ENCODE measurements at regions of chr11 and their contacts with region 1.

Region 1: DNA sequence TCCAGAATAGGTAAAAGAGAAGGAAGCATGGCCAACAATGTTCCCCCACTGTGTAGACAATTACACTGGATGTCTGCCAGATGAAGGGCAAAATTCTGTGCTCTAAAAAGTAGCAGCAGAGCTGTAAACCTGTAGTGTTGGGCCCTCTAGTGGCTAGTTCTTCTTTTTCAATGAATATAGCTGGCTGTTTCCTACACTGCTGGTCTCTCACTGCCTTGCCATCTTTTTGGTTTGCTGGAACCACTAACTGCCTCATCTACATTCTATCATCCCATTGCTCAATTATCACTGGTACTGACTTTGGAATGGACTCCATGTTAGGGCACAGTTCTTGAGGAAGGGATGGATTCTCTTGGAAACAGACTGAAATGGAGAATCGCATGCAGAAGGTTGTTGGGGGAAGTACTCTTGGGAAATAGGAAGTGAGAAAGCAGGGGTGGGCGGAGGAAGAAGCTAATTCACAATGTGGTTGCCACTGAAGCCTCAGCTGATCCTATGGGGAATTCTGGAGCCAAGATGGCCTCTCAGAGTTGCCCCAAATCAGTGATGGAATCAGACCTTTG is 17.9 kb downstream of the KCNE3 start:
- DNase-seq: peak in 1 of 2 donors; percentile 83
- ATAC-seq: peak; percentile 76 to 88 (median 86)
- H3K4me3 ChIP-seq: no peak overlapping the region
- H3K4me3 Mint-ChIP-seq: no peak overlapping the region
- H3K27ac ChIP-seq: no peak overlapping the region
- H3K27ac Mint-ChIP-seq: no peak overlapping the region
- H3K4me1 ChIP-seq: no peaks in the 10 kb centered on the region
- H3K4me1 Mint-ChIP-seq: peaks cover 0 to 10% of the 10 kb centered on the region in 2 donors
- H3K27me3 ChIP-seq: no peaks in the 10 kb centered on the region
- H3K27me3 Mint-ChIP-seq: peaks cover 11 to 18% of the 10 kb centered on the region in 2 donors
- CTCF ChIP-seq: peak; percentile 61

Region 2: GRCh38 chr11:73965076-73965860 is 484.2 kb before region 1 on chr11:
- intact Hi-C with region 1: loop called (anchors 5 kb)
- DNase-seq: peak in 1 of 2 donors; percentile 12
- ATAC-seq: no peak
- H3K4me3 ChIP-seq: no peak overlapping the region
- H3K4me3 Mint-ChIP-seq: no peak overlapping the region
- H3K27ac ChIP-seq: no peak overlapping the region
- H3K27ac Mint-ChIP-seq: no peak overlapping the region
- H3K4me1 ChIP-seq: peaks cover 36% of the 10 kb centered on the region
- H3K4me1 Mint-ChIP-seq: peaks cover 25 to 30% of the 10 kb centered on the region in 2 donors
- H3K27me3 ChIP-seq: no peaks in the 10 kb centered on the region
- H3K27me3 Mint-ChIP-seq: no peaks in the 10 kb centered on the region
- CTCF ChIP-seq: no peak

Region 3: GRCh38 chr11:74255741-74256369 is 193.6 kb before region 1 on chr11:
- intact Hi-C with region 1: loop called (anchors 1 kb)
- DNase-seq: peak; percentile 32 to 81
- ATAC-seq: peak; percentile 69 to 91 (median 74)
- H3K4me3 ChIP-seq: no peak overlapping the region
- H3K4me3 Mint-ChIP-seq: no peak overlapping the region
- H3K27ac ChIP-seq: no peak overlapping the region
- H3K27ac Mint-ChIP-seq: no peak overlapping the region
- H3K4me1 ChIP-seq: no peaks in the 10 kb centered on the region
- H3K4me1 Mint-ChIP-seq: no peaks in the 10 kb centered on the region
- H3K27me3 ChIP-seq: no peaks in the 10 kb centered on the region
- H3K27me3 Mint-ChIP-seq: no peaks in the 10 kb centered on the region
- CTCF ChIP-seq: peak; percentile 83

Region 4: DNA sequence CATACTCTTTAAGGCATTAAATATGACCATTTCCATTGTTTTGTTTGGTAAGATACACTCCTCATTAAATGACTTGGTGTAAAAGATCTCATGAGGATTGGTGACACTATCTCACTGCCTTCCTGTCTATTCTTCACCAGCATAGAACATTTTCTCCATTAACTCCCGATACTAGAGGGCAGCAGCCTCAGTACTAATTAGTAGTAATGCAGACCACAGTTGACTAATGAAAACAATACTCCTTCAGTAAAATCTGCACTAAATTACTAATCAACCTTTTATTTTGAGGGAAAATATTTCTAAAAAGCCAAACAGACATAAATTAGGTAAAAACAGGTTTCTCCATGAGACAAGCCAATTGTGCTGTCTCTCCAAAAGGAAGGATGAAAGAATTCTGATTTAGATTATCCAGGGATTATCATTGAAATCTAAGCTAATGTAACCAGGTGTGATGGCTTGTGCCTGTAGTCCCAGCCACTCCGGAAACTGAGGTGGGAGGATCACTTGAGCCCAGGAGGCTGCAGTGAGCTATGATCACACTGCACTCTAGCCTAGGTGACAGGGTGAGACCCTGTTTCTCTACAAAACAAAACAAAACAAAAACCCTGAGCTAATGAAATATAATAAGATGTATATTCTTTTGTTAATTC is 60.6 kb before region 1 on chr11:
- intact Hi-C with region 1: loop called (anchors 1 kb)
- DNase-seq: peak in 1 of 2 donors; percentile 84
- ATAC-seq: peak; percentile 88 to 89 (median 89)
- H3K4me3 ChIP-seq: no peak overlapping the region
- H3K4me3 Mint-ChIP-seq: no peak overlapping the region
- H3K27ac ChIP-seq: no peak overlapping the region
- H3K27ac Mint-ChIP-seq: no peak overlapping the region
- H3K4me1 ChIP-seq: no peaks in the 10 kb centered on the region
- H3K4me1 Mint-ChIP-seq: no peaks in the 10 kb centered on the region
- H3K27me3 ChIP-seq: no peaks in the 10 kb centered on the region
- H3K27me3 Mint-ChIP-seq: no peaks in the 10 kb centered on the region
- CTCF ChIP-seq: peak; percentile 82

Region 5: DNA sequence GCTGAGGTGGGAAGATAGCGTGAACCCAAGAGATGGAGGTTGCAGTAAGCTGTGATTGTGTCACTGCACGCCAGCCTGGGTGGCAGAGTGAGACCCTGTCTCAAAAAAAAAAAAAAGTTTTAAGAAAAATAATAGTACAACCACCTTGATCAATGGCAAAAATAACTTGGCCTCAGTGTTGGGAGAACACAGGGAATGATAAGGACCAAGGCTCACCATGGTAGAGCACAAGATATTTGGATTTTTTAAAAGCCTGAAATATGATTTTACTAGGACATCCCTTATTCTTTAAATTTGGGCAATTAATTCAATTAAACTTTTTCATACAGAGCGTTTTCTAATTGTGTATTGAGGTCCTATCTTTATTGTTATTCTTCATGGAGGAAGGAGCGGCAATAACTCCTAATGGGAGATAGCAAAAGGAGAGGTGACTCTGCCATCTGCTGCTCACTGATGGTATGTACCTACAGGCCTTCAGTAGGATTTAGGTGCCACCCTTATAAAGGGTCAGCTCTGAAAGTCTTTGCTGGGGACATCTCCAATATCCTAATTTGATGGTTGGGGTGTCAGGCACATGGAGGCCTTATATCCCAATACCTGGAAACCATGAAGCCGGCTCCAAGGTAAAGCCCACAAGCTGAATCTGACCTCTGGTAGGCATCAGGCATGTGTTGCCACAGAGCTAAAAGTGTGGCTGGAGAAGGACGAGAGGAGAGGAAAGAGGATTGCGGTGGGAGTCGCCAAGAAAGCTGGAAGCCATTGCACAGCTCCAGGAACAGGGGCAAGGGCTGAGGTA is 121.0 kb after region 1 on chr11:
- intact Hi-C with region 1: loop called (anchors 2 kb)
- DNase-seq: peak in 1 of 2 donors; percentile 56
- ATAC-seq: peak in 1 of 3 donors; percentile 44
- H3K4me3 ChIP-seq: no peak overlapping the region
- H3K4me3 Mint-ChIP-seq: no peak overlapping the region
- H3K27ac ChIP-seq: no peak overlapping the region
- H3K27ac Mint-ChIP-seq: no peak overlapping the region
- H3K4me1 ChIP-seq: no peaks in the 10 kb centered on the region
- H3K4me1 Mint-ChIP-seq: no peaks in the 10 kb centered on the region
- H3K27me3 ChIP-seq: no peaks in the 10 kb centered on the region
- H3K27me3 Mint-ChIP-seq: peaks cover 0 to 6% of the 10 kb centered on the region in 2 donors
- CTCF ChIP-seq: peak; percentile 21

Measured in natural killer cell (primary cell).